ENCODE measurements at regions of chr15 and their contacts with region 1.

Region 1: DNA sequence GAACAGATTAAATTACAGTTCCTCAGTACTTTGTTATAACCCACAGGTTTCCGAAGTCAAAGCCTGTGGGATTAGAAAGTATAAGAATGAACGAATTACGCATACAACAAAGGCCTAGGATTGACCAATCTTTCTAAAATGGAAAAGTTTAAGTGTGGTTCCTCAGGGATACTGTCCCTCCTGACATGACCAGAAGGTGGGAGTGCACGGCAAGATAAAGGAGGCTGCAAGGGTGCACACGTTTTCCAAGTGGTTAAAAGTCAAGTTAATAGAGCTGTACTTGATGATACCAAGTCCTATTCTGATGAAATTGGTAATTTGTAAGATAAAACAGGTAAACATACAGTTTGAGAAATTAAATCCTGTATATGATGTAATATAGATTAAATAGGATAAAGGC is 96.2 kb downstream of the ALDH1A2 start:
- DNase-seq: no peak
- ATAC-seq: no peak

Region 2: DNA sequence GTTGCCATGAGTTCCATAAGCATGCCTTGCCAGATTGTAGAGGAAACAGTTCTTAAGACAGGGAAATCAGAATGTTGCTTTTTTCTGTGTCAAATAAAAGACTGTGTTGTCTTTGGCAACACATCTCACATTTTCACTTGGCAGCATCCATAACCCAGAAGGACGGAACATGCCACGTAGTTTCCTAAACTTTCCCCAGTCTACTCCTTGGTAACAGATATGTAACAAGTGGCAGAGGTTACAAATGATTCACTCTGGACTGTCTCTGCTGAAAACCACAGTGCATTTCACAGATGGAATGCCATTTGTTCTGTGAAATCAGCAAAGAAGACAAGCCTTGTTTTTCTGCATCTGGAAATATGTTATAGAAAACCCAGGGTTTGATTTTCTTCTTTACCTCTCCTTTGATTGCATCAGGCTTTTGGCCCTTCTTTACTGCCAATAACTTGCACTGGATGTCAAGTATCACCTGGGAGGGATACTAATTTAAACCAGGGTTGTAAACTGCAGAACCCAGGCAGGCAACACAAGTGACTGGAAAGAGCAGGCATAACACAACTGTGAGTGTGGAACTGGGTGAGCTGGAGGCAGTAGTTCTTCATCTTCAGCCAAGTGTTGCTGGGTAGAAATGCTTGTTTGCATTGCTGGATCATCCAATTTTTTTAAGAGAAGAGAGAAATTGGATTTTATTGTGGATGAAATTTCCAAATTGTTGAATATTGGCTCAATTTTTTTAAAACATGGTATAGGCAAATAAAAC is 1910.3 kb after region 1 on chr15:
- intact Hi-C with region 1: loop called (anchors 5 kb)
- DNase-seq: no peak
- ATAC-seq: peak; percentile 53